B cell (primary cell): ENCODE measurements at regions of chr12 and their contacts with region 1.

Region 1: DNA sequence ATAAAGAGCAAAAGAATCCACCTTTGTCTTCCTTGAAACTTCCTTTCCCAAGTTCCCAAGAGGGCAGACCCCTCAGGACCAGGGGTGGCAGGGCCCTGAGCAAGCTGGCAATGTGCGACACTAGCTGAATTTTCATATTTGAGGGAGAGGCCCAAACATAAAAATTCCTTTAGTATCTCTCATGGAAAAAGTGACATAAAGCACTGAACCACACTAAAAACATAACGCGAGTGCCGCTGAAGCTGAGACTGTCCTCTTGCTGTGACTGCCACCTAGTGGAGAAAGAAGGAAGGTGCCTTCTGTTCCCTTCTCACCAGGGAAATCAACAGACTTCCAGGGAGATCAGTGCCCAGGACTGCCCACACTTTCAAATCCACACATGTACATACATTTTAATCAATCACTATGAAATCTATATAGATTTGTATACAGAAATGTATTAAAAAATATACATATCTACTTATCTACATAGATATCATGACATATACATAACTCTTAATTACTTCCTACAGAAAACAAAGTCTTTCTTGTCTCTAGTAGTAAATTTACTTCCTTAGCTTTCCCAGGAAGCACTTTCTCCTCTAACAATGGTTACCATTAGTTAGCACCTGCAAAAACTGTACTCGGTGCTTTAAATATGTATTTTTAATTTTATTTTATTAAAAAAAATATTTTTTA is 53.8 kb downstream of the SSH1 start:
- DNase-seq: peak; percentile 84
- ATAC-seq: peak; percentile 92
- H3K4me3 ChIP-seq: no peak overlapping the region
- H3K4me3 Mint-ChIP-seq: no peak overlapping the region
- H3K27ac ChIP-seq: no peak overlapping the region
- H3K27ac Mint-ChIP-seq: peak overlapping the region; percentile 71
- H3K4me1 ChIP-seq: peaks cover 8 to 11% of the 10 kb centered on the region in 2 donors
- H3K4me1 Mint-ChIP-seq: peaks cover 19% of the 10 kb centered on the region
- H3K27me3 ChIP-seq: no peaks in the 10 kb centered on the region
- H3K27me3 Mint-ChIP-seq: no peaks in the 10 kb centered on the region
- CTCF ChIP-seq: peak; percentile 98

Region 2: GRCh38 chr12:107829271-107829670 is 974.3 kb before region 1 on chr12:
- CTCF ChIA-PET with region 1: no interaction called
- POLR2A ChIA-PET with region 1: no interaction called
- intact Hi-C with region 1: no loop called
- DNase-seq: no peak
- ATAC-seq: no peak
- H3K4me3 ChIP-seq: no peak overlapping the region
- H3K4me3 Mint-ChIP-seq: no peak overlapping the region
- H3K27ac ChIP-seq: no peak overlapping the region
- H3K27ac Mint-ChIP-seq: no peak overlapping the region
- H3K4me1 ChIP-seq: no peaks in the 10 kb centered on the region
- H3K4me1 Mint-ChIP-seq: no peaks in the 10 kb centered on the region
- H3K27me3 ChIP-seq: peaks cover 0 to 15% (median 2%) of the 10 kb centered on the region in 4 experiments
- H3K27me3 Mint-ChIP-seq: peaks cover 37% of the 10 kb centered on the region
- CTCF ChIP-seq: no peak

Region 3: DNA sequence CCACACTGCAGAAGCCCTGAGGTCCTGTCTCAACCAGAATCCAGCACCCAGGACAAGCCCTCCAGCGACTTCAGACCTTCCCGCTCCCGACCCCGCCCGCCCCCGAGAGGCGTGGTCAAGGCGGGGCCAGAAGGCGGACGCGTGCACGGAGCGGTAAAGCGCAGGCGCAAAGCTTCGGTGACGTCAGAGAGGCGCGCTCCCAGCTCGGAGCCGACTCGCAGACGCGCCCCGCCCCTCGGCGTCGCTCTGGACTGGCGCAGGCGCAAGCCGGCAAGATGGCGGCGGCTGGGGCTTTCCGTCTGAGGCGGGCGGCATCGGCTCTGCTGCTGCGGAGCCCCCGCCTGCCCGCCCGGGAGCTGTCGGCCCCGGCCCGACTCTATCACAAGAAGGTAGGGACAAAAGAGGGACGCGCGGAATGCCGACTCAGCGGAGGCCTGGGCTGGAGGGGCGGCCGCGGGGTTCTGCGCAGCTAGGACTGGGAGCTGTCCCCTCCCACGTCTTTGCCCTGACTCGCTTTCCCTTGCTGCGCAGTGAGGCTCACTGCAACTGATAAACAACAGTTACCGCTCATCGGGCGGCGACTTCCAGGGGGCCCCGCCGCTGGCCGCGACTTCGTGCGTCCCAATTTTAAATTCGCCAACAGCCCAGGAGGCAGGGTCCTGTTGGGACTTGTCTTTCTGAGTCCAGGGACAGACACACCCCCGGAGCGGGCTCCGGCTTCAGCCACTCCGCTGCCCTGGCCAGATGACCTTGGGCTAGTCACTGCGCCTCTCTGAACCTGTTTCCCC is 241.0 kb before region 1 on chr12 and contains the start of gene ISCU:
- CTCF ChIA-PET with region 1: interaction called, 176 read pairs
- POLR2A ChIA-PET with region 1: interaction called, 3 read pairs
- intact Hi-C with region 1: loop called (anchors 1 kb)
- DNase-seq: peak; percentile 99
- ATAC-seq: peak; percentile 73
- H3K4me3 ChIP-seq: peak within 1 kb of the TSS; percentile 84 to 99 (median 98)
- H3K4me3 Mint-ChIP-seq: peak within 1 kb of the TSS; percentile 100
- H3K27ac ChIP-seq: peak within 1 kb of the TSS; percentile 94 to 97
- H3K27ac Mint-ChIP-seq: peak within 1 kb of the TSS; percentile 100
- H3K4me1 ChIP-seq: peaks cover 53 to 61% of the 10 kb centered on the region in 2 donors
- H3K4me1 Mint-ChIP-seq: peaks cover 72% of the 10 kb centered on the region
- H3K27me3 ChIP-seq: no peaks in the 10 kb centered on the region
- H3K27me3 Mint-ChIP-seq: no peaks in the 10 kb centered on the region
- CTCF ChIP-seq: no peak
- total RNA-seq, gene ISCU: 190 and 209 TPM in 2 replicates

Region 4: DNA sequence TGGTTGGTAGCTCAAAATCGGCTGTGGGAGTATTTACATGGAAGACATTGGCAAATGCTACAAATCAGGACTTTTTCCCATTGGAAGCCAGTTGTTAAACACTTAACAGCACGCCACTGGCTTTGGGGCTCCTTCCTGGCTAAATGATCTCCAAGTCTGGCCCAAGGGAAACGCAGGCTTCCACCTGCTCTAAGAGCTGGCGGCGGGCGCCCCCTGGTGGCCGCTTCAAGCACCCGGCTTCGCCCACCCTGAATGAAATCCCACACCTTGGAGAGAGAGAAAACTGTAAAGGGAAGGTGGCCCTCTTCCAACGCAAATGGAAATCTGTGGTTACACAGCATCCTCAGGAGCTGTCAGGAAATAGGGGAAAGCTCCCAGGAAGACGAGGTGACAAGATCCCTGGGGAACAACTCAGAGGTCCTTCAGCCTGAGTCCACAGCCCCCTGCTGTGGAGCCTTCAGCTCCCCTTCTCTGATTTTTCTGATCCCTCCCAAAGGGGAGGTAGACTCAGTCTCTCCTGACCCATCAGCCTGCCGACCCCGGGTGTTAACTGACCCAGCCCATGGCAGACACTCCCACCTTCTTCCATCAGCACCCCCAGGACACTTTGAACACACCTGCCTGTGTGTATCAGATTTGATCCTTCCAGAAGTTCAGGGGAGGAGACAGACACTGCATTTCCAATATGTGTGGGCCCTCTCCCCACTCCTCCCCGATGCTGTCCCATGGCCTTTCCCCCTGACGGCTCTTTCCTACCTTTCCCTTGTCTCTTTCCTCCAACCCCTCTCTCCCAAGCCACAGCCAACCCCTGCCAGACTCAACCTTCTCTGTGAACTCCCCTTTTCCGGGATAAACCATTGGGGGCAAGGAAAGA is 185.3 kb before region 1 on chr12:
- CTCF ChIA-PET with region 1: interaction called, 102 read pairs
- POLR2A ChIA-PET with region 1: no interaction called
- intact Hi-C with region 1: loop called (anchors 2 kb)
- DNase-seq: peak; percentile 88
- ATAC-seq: peak; percentile 35
- H3K4me3 ChIP-seq: no peak overlapping the region
- H3K4me3 Mint-ChIP-seq: no peak overlapping the region
- H3K27ac ChIP-seq: peak overlapping the region; percentile 80 to 93
- H3K27ac Mint-ChIP-seq: peak overlapping the region; percentile 98
- H3K4me1 ChIP-seq: peaks cover 41 to 49% of the 10 kb centered on the region in 2 donors
- H3K4me1 Mint-ChIP-seq: peaks cover 69% of the 10 kb centered on the region
- H3K27me3 ChIP-seq: no peaks in the 10 kb centered on the region
- H3K27me3 Mint-ChIP-seq: no peaks in the 10 kb centered on the region
- CTCF ChIP-seq: peak; percentile 98

Region 5: GRCh38 chr12:108640802-108641445 is 162.6 kb before region 1 on chr12:
- CTCF ChIA-PET with region 1: interaction called, 32 read pairs
- POLR2A ChIA-PET with region 1: no interaction called
- intact Hi-C with region 1: no loop called
- DNase-seq: peak; percentile 47
- ATAC-seq: no peak
- H3K4me3 ChIP-seq: no peak overlapping the region
- H3K4me3 Mint-ChIP-seq: peak overlapping the region; percentile 65
- H3K27ac ChIP-seq: peak overlapping the region; percentile 78 to 95
- H3K27ac Mint-ChIP-seq: peak overlapping the region; percentile 89
- H3K4me1 ChIP-seq: peaks cover 63 to 70% of the 10 kb centered on the region in 2 donors
- H3K4me1 Mint-ChIP-seq: peaks cover 89% of the 10 kb centered on the region
- H3K27me3 ChIP-seq: no peaks in the 10 kb centered on the region
- H3K27me3 Mint-ChIP-seq: no peaks in the 10 kb centered on the region
- CTCF ChIP-seq: no peak

Region 6: GRCh38 chr12:108691175-108691997 is 112.2 kb before region 1 on chr12:
- CTCF ChIA-PET with region 1: interaction called, 27 read pairs
- POLR2A ChIA-PET with region 1: no interaction called
- intact Hi-C with region 1: no loop called
- DNase-seq: peak; percentile 34
- ATAC-seq: peak; percentile 83
- H3K4me3 ChIP-seq: peak overlapping the region in 4 of 5 experiments; percentile 4 to 38 (median 31)
- H3K4me3 Mint-ChIP-seq: peak overlapping the region; percentile 82
- H3K27ac ChIP-seq: peak overlapping the region in 1 of 2 donors; percentile 40
- H3K27ac Mint-ChIP-seq: peak overlapping the region; percentile 74
- H3K4me1 ChIP-seq: peaks cover 32 to 35% of the 10 kb centered on the region in 2 donors
- H3K4me1 Mint-ChIP-seq: peaks cover 50% of the 10 kb centered on the region
- H3K27me3 ChIP-seq: no peaks in the 10 kb centered on the region
- H3K27me3 Mint-ChIP-seq: no peaks in the 10 kb centered on the region
- CTCF ChIP-seq: no peak

Region 7: DNA sequence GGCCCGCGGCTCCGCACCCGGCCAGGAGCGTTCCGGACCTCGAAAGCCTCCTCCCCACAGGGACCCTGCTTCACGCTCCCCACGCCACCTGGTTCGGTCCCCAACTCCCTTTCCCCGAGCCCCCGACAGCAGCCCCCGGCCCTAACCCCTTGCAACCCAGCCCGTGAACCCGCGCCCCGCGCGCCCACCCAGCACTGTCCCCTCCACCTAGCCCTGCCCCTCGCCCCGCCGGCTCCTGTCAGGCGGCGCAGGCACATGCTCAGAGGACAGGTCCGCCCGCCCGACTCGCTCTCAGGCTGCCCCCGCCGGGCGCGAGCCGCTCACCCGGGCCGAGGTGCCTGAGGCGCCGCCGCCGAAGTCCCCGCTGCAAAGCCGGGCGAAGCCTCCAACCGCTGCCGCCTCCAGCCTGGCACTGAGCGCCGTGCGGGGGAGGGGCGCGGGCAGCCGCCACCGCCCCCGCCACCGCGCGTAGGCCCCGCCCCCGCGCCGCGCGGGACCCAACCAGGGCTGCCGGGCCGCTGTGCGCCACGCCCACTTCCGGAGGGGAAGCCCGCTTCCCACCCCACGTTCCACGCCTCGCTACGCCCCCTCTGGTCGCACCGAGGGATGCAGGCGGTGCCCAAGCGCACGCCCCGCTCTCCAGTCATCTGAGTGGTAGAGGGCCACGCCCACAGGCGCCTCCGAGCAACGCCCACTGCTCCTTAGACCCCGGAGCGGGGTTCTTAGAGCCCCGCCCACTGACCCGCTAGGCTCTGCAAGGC is 72.3 kb before region 1 on chr12 and contains the start of gene CORO1C:
- CTCF ChIA-PET with region 1: interaction called, 3 read pairs
- POLR2A ChIA-PET with region 1: interaction called, 5 read pairs
- intact Hi-C with region 1: loop called (anchors 5 kb)
- DNase-seq: peak; percentile 97
- ATAC-seq: peak; percentile 73
- H3K4me3 ChIP-seq: peak within 1 kb of the TSS; percentile 70 to 92 (median 86)
- H3K4me3 Mint-ChIP-seq: peak within 1 kb of the TSS; percentile 99
- H3K27ac ChIP-seq: peak within 1 kb of the TSS; percentile 80 to 92
- H3K27ac Mint-ChIP-seq: peak within 1 kb of the TSS; percentile 98
- H3K4me1 ChIP-seq: peaks cover 11 to 16% of the 10 kb centered on the region in 2 donors
- H3K4me1 Mint-ChIP-seq: peaks cover 51% of the 10 kb centered on the region
- H3K27me3 ChIP-seq: no peaks in the 10 kb centered on the region
- H3K27me3 Mint-ChIP-seq: no peaks in the 10 kb centered on the region
- CTCF ChIP-seq: peak; percentile 83
- total RNA-seq, gene CORO1C: 58.9 and 68.0 TPM in 2 replicates

Region 8: GRCh38 chr12:108950991-108951739 is 147.6 kb after region 1 on chr12:
- CTCF ChIA-PET with region 1: interaction called, 28 read pairs
- POLR2A ChIA-PET with region 1: no interaction called
- intact Hi-C with region 1: loop called (anchors 2 kb)
- DNase-seq: peak; percentile 85
- ATAC-seq: peak; percentile 73
- H3K4me3 ChIP-seq: no peak overlapping the region
- H3K4me3 Mint-ChIP-seq: no peak overlapping the region
- H3K27ac ChIP-seq: no peak overlapping the region
- H3K27ac Mint-ChIP-seq: no peak overlapping the region
- H3K4me1 ChIP-seq: peaks cover 0 to 4% of the 10 kb centered on the region in 2 donors
- H3K4me1 Mint-ChIP-seq: peaks cover 6% of the 10 kb centered on the region
- H3K27me3 ChIP-seq: peaks cover 0 to 5% (median 0%) of the 10 kb centered on the region in 4 experiments
- H3K27me3 Mint-ChIP-seq: peaks cover 9% of the 10 kb centered on the region
- CTCF ChIP-seq: peak; percentile 99